ENCODE measurements at regions of chr3 and their contacts with region 1.

Region 1: GRCh38 chr3:47836986-47837385 is 34.0 kb downstream of the DHX30 start:
- DNase-seq: no peak
- H3K4me3 ChIP-seq: no peak overlapping the region
- H3K27ac ChIP-seq: no peak overlapping the region
- H3K4me1 ChIP-seq: peaks cover 11 to 17% (median 13%) of the 10 kb centered on the region in 4 experiments
- H3K27me3 ChIP-seq: no peaks in the 10 kb centered on the region
- CTCF ChIP-seq: no peak
- EP300 ChIP-seq: no peak
- POLR2A ChIP-seq: no peak
- RAD21 ChIP-seq: no peak

Region 2: GRCh38 chr3:47813551-47814177 is 23.3 kb before region 1 on chr3:
- CTCF ChIA-PET with region 1: interaction called, 22 read pairs
- POLR2A ChIA-PET with region 1: interaction called, 4 read pairs
- DNase-seq: no peak
- H3K4me3 ChIP-seq: no peak overlapping the region
- H3K27ac ChIP-seq: no peak overlapping the region
- H3K4me1 ChIP-seq: no peaks in the 10 kb centered on the region
- H3K27me3 ChIP-seq: no peaks in the 10 kb centered on the region
- CTCF ChIP-seq: no peak
- EP300 ChIP-seq: no peak
- POLR2A ChIP-seq: no peak
- RAD21 ChIP-seq: no peak

Region 3: DNA sequence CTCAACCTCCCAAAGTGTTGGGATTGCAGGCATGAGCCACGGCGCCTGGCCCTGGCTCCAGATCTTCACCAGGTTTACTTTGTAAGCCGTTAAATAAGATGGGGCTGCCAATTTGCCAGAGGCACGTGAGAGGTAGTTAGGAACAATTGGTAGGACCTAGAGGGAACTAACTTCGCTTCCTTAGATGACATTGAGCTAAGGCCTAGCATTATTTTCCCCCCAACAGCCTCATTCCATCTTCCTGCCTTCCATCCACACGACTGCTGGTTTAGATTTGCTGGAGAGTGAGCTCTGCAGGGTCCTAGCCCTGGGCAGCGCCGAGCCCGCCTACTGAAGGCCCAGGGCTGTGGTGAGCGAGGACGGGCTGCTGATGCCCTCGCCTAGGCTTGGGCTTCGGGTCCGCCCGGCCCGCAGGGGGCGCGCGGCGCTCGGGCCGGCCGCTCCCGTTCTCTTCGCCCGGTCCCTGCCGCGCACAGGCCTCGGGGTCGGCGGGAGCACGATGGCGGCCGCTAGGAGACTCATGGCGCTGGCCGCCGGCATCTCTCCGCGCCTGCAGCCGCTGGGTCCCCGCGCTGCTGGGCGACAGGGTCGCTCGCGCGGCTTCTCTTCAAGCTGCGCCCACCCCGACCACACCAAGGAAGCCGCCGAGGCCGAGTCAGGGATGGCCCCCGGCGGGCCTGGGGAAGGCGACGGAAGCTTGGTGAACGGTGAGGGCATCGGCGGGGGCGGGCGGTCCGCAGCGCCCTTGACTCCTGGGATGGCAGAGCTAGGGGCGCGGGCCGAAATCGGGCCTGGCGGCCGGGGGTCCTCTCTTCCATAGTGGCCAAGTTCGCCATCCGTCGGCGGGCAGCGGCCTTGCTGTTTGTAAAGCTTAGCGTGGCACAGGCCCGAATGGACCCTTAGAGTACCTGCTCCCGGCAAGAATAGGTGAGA is 12.2 kb before region 1 on chr3:
- CTCF ChIA-PET with region 1: interaction called, 37 read pairs
- POLR2A ChIA-PET with region 1: interaction called, 34 read pairs
- DNase-seq: peak in 1 of 2 experiments; percentile 86
- H3K4me3 ChIP-seq: peak overlapping the region; percentile 80 to 99 (median 86)
- H3K27ac ChIP-seq: peak overlapping the region; percentile 79
- H3K4me1 ChIP-seq: peaks cover 3 to 6% (median 4%) of the 10 kb centered on the region in 4 experiments; a peak in 5 of 7 replicates
- H3K27me3 ChIP-seq: no peaks in the 10 kb centered on the region
- CTCF ChIP-seq: peak; percentile 76 to 91 (median 90)
- EP300 ChIP-seq: no peak; a peak in 1 of 3 replicates
- POLR2A ChIP-seq: peak; percentile 84 to 93
- RAD21 ChIP-seq: peak; percentile 23 to 53; a peak in 3 of 4 replicates

Region 4: GRCh38 chr3:47849699-47850563 is 12.9 kb after region 1 on chr3:
- CTCF ChIA-PET with region 1: interaction called, 59 read pairs
- POLR2A ChIA-PET with region 1: interaction called, 17 read pairs
- DNase-seq: peak in 1 of 2 experiments; percentile 52
- H3K4me3 ChIP-seq: no peak overlapping the region
- H3K27ac ChIP-seq: no peak overlapping the region
- H3K4me1 ChIP-seq: no peaks in the 10 kb centered on the region
- H3K27me3 ChIP-seq: no peaks in the 10 kb centered on the region
- CTCF ChIP-seq: peak in 2 of 3 experiments; percentile 32 to 53; a peak in 3 of 4 replicates
- EP300 ChIP-seq: no peak
- POLR2A ChIP-seq: no peak; a peak in 1 of 3 replicates
- RAD21 ChIP-seq: peak; percentile 39 to 46; a peak in 3 of 4 replicates

Region 5: DNA sequence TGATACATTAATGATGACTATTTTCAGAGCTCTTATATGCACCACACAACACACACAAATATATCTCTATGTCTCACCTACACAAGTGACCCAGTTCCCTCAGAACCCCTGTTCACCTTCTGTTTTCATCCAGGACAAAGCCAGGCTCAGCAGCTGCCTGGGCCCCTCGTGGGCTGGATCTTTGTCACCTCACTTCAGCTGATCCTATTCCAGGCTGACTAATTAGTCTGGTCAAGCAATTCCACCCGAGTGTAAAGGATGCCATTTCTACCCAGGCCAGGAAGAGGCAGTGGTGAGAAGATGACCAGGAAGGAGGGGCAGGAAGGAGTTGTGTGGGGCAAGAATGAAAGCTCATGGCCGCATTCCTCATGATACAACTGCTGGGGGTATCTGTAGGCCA is 28.2 kb after region 1 on chr3:
- CTCF ChIA-PET with region 1: interaction called, 25 read pairs
- POLR2A ChIA-PET with region 1: no interaction called
- DNase-seq: no peak
- H3K4me3 ChIP-seq: no peak overlapping the region
- H3K27ac ChIP-seq: no peak overlapping the region
- H3K4me1 ChIP-seq: no peaks in the 10 kb centered on the region
- H3K27me3 ChIP-seq: no peaks in the 10 kb centered on the region
- CTCF ChIP-seq: peak in 1 of 3 experiments; percentile 28; a peak in 2 of 4 replicates
- EP300 ChIP-seq: no peak
- POLR2A ChIP-seq: no peak
- RAD21 ChIP-seq: peak; percentile 30 to 43; a peak in 3 of 4 replicates

Region 6: DNA sequence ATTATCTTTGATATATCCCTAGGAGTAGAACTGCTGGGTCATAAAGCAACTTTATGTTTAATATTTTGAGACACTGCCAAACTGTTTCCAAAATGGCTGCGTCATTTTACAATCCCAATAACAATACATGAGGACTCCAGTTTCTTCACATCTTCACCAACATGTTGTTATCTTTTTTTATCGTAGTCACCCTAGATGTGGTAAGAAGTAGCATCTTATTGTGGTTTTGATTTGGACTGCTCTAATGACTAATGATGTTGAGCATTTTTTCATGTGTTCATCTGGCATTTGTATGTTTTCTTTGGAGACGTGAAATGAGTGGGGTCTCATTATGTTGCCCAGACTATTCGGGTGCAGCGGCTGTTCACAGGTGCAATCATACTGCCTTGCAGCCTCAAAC is 95.4 kb after region 1 on chr3:
- CTCF ChIA-PET with region 1: no interaction called
- POLR2A ChIA-PET with region 1: no interaction called
- DNase-seq: no peak
- H3K4me3 ChIP-seq: no peak overlapping the region
- H3K27ac ChIP-seq: no peak overlapping the region
- H3K4me1 ChIP-seq: no peaks in the 10 kb centered on the region
- H3K27me3 ChIP-seq: no peaks in the 10 kb centered on the region
- CTCF ChIP-seq: no peak
- EP300 ChIP-seq: no peak
- POLR2A ChIP-seq: no peak
- RAD21 ChIP-seq: no peak

Region 7: GRCh38 chr3:47989981-47990440 is 153.0 kb after region 1 on chr3:
- CTCF ChIA-PET with region 1: interaction called, 23 read pairs
- POLR2A ChIA-PET with region 1: interaction called, 5 read pairs
- DNase-seq: peak; percentile 54 to 62
- H3K4me3 ChIP-seq: no peak overlapping the region
- H3K27ac ChIP-seq: no peak overlapping the region
- H3K4me1 ChIP-seq: no peaks in the 10 kb centered on the region; a peak in 1 of 7 replicates
- H3K27me3 ChIP-seq: no peaks in the 10 kb centered on the region
- CTCF ChIP-seq: peak; percentile 72 to 97 (median 90)
- EP300 ChIP-seq: no peak
- POLR2A ChIP-seq: no peak
- RAD21 ChIP-seq: peak; percentile 93 to 95

Region 8: GRCh38 chr3:48157950-48158376 is 321.0 kb after region 1 on chr3:
- CTCF ChIA-PET with region 1: interaction called, 36 read pairs
- POLR2A ChIA-PET with region 1: interaction called, 4 read pairs
- DNase-seq: peak; percentile 43 to 87
- H3K4me3 ChIP-seq: no peak overlapping the region
- H3K27ac ChIP-seq: no peak overlapping the region
- H3K4me1 ChIP-seq: no peaks in the 10 kb centered on the region; a peak in 1 of 7 replicates
- H3K27me3 ChIP-seq: no peaks in the 10 kb centered on the region
- CTCF ChIP-seq: peak; percentile 79 to 80 (median 80)
- EP300 ChIP-seq: no peak
- POLR2A ChIP-seq: no peak
- RAD21 ChIP-seq: peak; percentile 71 to 77

Measured in H1 (cell line).